ENCODE measurements at regions of chr7 and their contacts with region 1.

Region 1: GRCh38 chr7:32357535-32358277 is 132.5 kb downstream of the LSM5 start:
- DNase-seq: no peak
- H3K4me3 ChIP-seq: no peak overlapping the region
- H3K27ac ChIP-seq: no peak overlapping the region
- H3K27me3 ChIP-seq: peaks cover 0 to 27% (median 1%) of the 10 kb centered on the region in 45 donors
- CTCF ChIP-seq: peak in 45 of 56 donors; percentile 11 to 65 (median 37)

Region 2: GRCh38 chr7:32212321-32212720 is 145.4 kb before region 1 on chr7:
- intact Hi-C with region 1: loop called (anchors 5 kb)
- DNase-seq: no peak
- H3K4me3 ChIP-seq: no peak overlapping the region
- H3K27ac ChIP-seq: no peak overlapping the region
- H3K27me3 ChIP-seq: peaks cover 0 to 21% (median 0%) of the 10 kb centered on the region in 45 donors
- CTCF ChIP-seq: no peak

Region 3: GRCh38 chr7:33511778-33512177 is 1154.1 kb after region 1 on chr7:
- intact Hi-C with region 1: no loop called
- DNase-seq: no peak
- H3K4me3 ChIP-seq: no peak overlapping the region
- H3K27ac ChIP-seq: no peak overlapping the region
- H3K27me3 ChIP-seq: no peaks in the 10 kb centered on the region
- CTCF ChIP-seq: no peak

Measured in dorsolateral prefrontal cortex (tissue), 120 donors.